CD8-positive, alpha-beta memory T cell (primary cell): ENCODE measurements at regions of chr6 and their contacts with region 1.

Region 1: DNA sequence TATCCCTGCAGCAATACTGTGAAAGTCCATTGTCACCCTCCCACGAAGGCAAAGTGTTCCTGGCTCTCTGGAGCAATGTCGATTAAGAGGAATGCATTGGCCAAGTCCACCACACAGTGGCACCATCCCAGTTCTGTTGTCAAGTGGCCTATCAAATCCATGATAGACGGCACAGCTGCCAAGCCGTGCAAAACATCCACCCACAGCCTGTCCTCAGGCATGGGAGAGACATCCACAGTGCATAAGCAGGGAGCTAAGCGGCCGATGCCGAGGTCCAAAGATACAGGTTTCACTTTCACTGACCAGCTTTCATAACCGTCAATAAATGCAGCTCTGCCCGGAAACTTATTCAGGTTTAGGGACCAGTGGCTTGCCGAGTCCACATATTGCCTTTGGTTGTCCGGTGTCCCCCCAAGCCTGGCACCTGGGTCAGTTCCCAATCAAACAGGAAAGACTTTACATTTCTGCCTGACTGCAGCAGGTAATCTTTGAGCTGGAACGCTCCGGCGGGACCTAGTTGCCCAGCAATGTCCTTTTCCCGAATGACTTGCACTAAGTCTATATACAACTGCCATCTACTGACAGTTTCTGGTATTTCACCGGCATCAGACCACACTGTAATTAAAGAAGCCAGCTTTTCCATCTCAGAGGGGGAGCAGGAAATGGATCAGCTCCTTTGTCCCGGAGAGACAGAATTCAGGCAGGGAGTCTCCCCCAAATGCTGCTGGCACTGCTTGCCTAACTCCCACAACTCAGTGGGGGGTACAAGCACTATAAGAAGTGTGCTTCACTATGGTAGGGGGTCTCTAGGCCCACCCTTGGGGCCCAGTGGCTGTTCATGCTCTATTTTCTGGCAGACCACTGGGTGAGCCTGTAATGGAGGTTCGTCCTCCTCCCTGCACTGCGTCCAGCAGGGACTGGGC is 6.3 kb downstream of the ZKSCAN3 start:
- DNase-seq: peak; percentile 34 to 70 (median 58)
- H3K4me3 ChIP-seq: peak overlapping the region; percentile 75
- H3K4me3 Mint-ChIP-seq: peak overlapping the region; percentile 74 to 95 (median 90)
- H3K27ac ChIP-seq: peak overlapping the region; percentile 49
- H3K27ac Mint-ChIP-seq: peak overlapping the region in 7 of 8 donors; percentile 51 to 95 (median 86)
- H3K4me1 ChIP-seq: peaks cover 18% of the 10 kb centered on the region
- H3K4me1 Mint-ChIP-seq: peaks cover 24 to 40% (median 30%) of the 10 kb centered on the region in 3 donors
- H3K27me3 ChIP-seq: no peaks in the 10 kb centered on the region
- H3K27me3 Mint-ChIP-seq: no peaks in the 10 kb centered on the region

Region 2: GRCh38 chr6:28104392-28105244 is 251.4 kb before region 1 on chr6:
- CTCF ChIA-PET with region 1: interaction called, 14 read pairs
- POLR2A ChIA-PET with region 1: no interaction called
- DNase-seq: peak; percentile 77 to 89 (median 81)
- H3K4me3 ChIP-seq: peak overlapping the region; percentile 64
- H3K4me3 Mint-ChIP-seq: peak overlapping the region; percentile 91 to 94 (median 93)
- H3K27ac ChIP-seq: peak overlapping the region; percentile 78
- H3K27ac Mint-ChIP-seq: peak overlapping the region; percentile 81 to 97 (median 95)
- H3K4me1 ChIP-seq: no peaks in the 10 kb centered on the region
- H3K4me1 Mint-ChIP-seq: peaks cover 11 to 15% (median 11%) of the 10 kb centered on the region in 3 donors
- H3K27me3 ChIP-seq: no peaks in the 10 kb centered on the region
- H3K27me3 Mint-ChIP-seq: peaks cover 14 to 16% of the 10 kb centered on the region in 2 donors

Region 3: GRCh38 chr6:28335564-28336283 is 20.3 kb before region 1 on chr6 and contains the start of gene ZSCAN31:
- CTCF ChIA-PET with region 1: interaction called, 11 read pairs
- POLR2A ChIA-PET with region 1: interaction called, 4 read pairs
- DNase-seq: peak; percentile 73 to 92 (median 79)
- H3K4me3 ChIP-seq: peak within 1 kb of the TSS; percentile 80
- H3K4me3 Mint-ChIP-seq: no peak within 1 kb of the TSS
- H3K27ac ChIP-seq: peak within 1 kb of the TSS; percentile 96
- H3K27ac Mint-ChIP-seq: no peak within 1 kb of the TSS
- H3K4me1 ChIP-seq: peaks cover 21% of the 10 kb centered on the region
- H3K4me1 Mint-ChIP-seq: peaks cover 1 to 8% (median 5%) of the 10 kb centered on the region in 3 donors
- H3K27me3 ChIP-seq: no peaks in the 10 kb centered on the region
- H3K27me3 Mint-ChIP-seq: peaks cover 0 to 3% of the 10 kb centered on the region in 2 donors
- total RNA-seq, gene ZSCAN31: 1.1 to 2.6 TPM